Breast epithelium (tissue), 4 donors: ENCODE measurements at regions of chr9 and their contacts with region 1.

Region 1: GRCh38 chr9:763692-764524 is 77.6 kb upstream of the DMRT1 start:
- DNase-seq: peak; percentile 60 to 74
- H3K4me3 ChIP-seq: peak overlapping the region; percentile 7 to 41 (median 24)
- H3K27ac ChIP-seq: no peak overlapping the region
- H3K4me1 ChIP-seq: no peaks in the 10 kb centered on the region
- H3K27me3 ChIP-seq: no peaks in the 10 kb centered on the region
- CTCF ChIP-seq: peak; percentile 70 to 94 (median 93)
- POLR2A ChIP-seq: no peak

Region 2: DNA sequence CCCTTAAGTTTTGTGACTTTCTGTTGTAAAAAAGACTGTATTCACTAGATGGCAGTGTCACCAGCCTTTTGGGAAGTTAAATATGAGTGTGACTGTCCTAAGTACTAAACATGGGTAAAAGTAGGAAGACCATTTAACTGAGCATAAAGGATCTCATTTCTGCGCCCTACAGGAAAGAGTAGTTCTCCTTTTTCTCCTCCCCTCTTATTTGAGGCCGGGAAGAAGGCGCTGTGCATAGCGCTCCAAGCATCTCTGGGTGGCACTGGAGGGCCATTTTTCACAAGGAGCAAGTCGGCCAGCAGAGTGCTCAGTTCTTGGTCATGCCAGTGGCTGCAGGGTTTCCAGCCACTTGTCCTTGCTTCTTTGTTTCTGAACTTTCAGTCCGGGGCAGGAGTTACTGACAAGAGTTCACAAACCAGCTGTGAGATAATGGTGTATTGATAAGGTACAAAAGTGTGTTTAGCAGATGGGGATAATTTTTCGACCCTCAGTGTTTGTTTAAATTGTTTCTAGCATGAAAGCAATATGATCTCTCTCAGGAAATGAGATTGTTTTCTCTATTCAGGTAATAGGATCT is 150.0 kb before region 1 on chr9:
- intact Hi-C with region 1: loop called (anchors 2 kb)
- DNase-seq: peak; percentile 68 to 81
- H3K4me3 ChIP-seq: no peak overlapping the region
- H3K27ac ChIP-seq: peak overlapping the region; percentile 10 to 59
- H3K4me1 ChIP-seq: no peaks in the 10 kb centered on the region
- H3K27me3 ChIP-seq: no peaks in the 10 kb centered on the region
- CTCF ChIP-seq: peak; percentile 67 to 96 (median 87)
- POLR2A ChIP-seq: no peak